HEK293 (cell line): ENCODE measurements at regions of chr12 and their contacts with region 1.

Region 1: GRCh38 chr12:48795480-48796455 is 6.9 kb upstream of the ADCY6 start:
- H3K4me3 ChIP-seq: no peak overlapping the region
- H3K27ac ChIP-seq: no peak overlapping the region
- H3K4me1 ChIP-seq: no peaks in the 10 kb centered on the region
- CTCF ChIP-seq: peak; percentile 96

Region 2: GRCh38 chr12:48542300-48542928 is 253.4 kb before region 1 on chr12:
- CTCF ChIA-PET with region 1: interaction called, 19 read pairs
- POLR2A ChIA-PET with region 1: no interaction called
- H3K4me3 ChIP-seq: no peak overlapping the region
- H3K27ac ChIP-seq: no peak overlapping the region
- H3K4me1 ChIP-seq: no peaks in the 10 kb centered on the region
- CTCF ChIP-seq: no peak

Region 3: GRCh38 chr12:48681738-48682532 is 113.8 kb before region 1 on chr12 and contains the start of gene KANSL2:
- CTCF ChIA-PET with region 1: interaction called, 3 read pairs
- POLR2A ChIA-PET with region 1: interaction called, 10 read pairs
- H3K4me3 ChIP-seq: peak within 1 kb of the TSS; percentile 94
- H3K27ac ChIP-seq: peak within 1 kb of the TSS; percentile 70
- H3K4me1 ChIP-seq: no peaks in the 10 kb centered on the region; the same call in none of the 2 replicates
- CTCF ChIP-seq: peak; percentile 60; the same call in 1 of the 2 replicates

Region 4: DNA sequence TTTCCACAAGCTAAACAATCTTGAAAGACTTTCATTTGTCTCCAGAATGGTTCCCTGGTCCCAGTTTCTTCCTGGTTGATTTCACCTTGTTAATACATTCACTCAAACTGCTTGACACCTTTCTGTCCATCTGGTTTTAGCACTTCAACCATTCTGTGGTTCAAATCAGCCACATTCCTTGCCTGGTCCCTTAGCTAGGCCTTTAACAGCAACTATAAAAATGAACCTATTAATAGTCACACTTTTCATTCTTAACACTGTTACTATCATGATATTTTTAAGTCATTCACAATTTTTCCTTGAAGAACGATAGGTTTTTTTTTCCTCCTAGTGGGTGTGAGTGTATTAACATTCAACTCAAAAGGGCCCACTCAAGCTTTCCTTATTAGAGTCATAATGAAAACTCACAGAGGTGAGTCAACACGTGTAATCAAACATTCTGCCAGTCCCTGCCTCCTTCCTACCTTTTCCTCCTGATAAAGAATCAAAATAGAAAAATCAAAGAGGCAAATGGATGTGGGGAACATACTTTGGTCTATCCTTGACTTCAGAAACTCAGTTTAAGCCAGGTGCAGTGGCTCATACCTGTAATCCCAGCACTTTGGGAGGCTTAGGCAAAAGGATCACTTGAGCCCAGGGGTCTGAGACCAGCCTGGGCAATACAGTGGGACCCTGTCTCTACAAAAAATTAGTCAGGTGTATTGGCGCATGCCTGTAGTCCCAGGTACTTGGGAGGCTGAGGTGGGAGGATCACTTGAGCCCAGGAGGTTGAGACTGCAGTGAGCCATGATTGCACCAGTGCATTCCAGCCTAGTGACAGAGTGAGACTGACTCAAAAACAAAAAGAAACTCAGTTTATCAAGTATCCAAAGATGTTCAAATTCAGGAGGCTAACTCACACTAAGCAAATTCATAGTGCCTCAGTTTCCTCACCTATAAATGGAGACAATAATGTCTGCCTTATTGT is 44.7 kb before region 1 on chr12:
- CTCF ChIA-PET with region 1: interaction called, 122 read pairs
- POLR2A ChIA-PET with region 1: interaction called, 12 read pairs
- H3K4me3 ChIP-seq: no peak overlapping the region
- H3K27ac ChIP-seq: no peak overlapping the region
- H3K4me1 ChIP-seq: no peaks in the 10 kb centered on the region
- CTCF ChIP-seq: no peak

Region 5: DNA sequence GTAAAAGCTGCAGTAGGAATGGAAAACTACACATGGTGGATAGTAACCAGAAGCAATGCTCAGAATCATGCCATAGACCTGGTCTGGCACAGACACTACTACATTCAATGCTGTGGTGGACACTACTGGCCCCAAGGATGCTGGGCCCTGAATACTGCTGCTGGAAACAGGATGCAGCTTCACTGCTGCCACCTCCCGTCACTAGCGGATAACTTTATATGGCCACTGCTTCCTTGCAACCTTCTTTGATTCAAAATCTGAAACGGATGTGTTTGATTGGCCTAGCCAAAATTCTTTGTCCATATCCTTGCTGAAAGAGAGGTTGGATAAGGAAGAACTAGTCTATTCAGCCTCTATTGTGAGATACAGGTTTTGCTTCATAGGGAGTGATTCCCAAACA is 37.5 kb before region 1 on chr12:
- CTCF ChIA-PET with region 1: interaction called, 122 read pairs
- POLR2A ChIA-PET with region 1: interaction called, 12 read pairs
- H3K4me3 ChIP-seq: no peak overlapping the region
- H3K27ac ChIP-seq: no peak overlapping the region
- H3K4me1 ChIP-seq: no peaks in the 10 kb centered on the region
- CTCF ChIP-seq: no peak